HCT116 (cell line): ENCODE measurements at regions of chr10 and their contacts with region 1.

Region 1: DNA sequence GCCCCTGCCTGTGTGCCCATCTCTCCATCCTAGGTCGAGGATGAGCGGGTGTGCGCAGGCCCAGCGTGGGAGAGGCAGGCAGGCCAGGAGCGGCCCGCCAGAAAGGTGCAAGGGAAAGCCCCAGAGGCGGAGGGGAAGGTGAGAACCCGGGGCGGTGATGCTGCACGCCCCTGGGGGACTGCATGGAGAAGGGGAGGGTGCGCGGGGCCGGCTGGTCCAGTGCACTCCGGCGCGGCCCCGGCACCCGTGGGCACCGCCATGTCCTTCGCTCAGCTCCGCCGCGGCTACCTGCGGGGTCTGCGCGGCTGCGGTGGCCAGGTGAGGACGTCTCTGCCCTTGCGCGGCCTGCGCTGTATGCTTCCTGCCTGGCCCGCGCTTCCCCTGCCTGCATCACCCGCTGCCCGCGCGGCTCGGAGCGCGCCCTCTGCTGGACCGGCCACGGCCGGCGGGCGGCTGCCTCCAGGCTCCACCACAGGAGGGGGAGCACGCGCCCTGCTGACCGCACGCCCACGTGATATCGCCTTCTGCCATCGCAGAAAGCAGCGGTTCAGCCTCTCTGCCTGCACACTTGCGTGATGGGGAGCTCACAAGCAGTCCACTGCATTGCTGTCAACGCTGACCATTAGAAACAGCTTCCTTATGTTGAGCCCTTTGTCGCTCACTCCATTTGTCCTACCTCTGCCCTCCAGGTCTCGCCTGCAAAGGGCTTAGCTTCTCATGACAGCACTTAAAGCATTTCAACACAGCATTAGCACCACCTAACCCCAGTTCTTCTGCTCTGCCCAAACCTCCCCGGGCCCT is 73.9 kb downstream of the CXCL12 start:
- DNase-seq: peak; percentile 54
- ATAC-seq: peak; percentile 98
- H3K4me3 ChIP-seq: no peak overlapping the region
- H3K27ac ChIP-seq: no peak overlapping the region
- H3K4me1 ChIP-seq: peaks cover 0 to 8% of the 10 kb centered on the region in 2 experiments; a peak in 2 of 4 replicates
- H3K27me3 ChIP-seq: no peaks in the 10 kb centered on the region
- CTCF ChIP-seq: peak; percentile 74 to 86 (median 76)
- POLR2A ChIP-seq: no peak
- RAD21 ChIP-seq: peak; percentile 62

Region 2: DNA sequence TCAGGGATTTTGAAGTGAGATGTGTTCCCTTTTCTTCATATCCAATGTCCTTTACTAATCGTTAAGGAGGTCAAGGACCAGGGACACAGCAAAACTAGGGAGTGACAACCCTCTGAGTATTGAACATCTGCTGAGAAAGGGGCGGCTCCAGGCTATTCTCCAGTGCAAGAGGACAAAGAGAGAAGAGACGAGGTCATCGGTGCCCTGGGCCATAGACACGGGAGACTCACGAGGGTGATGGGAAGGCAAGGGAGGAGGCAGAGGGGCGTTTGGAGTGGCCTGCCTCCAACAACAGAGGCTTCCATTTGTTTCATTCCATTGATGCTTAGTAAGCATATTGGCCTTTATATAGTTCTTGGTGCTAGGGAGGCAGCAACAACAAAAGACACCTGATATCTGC is 194.5 kb before region 1 on chr10:
- CTCF ChIA-PET with region 1: no interaction called
- POLR2A ChIA-PET with region 1: no interaction called
- RAD21 ChIA-PET with region 1: no interaction called
- intact Hi-C with region 1: no loop called
- DNase-seq: no peak
- ATAC-seq: no peak
- H3K4me3 ChIP-seq: no peak overlapping the region
- H3K27ac ChIP-seq: no peak overlapping the region
- H3K4me1 ChIP-seq: no peaks in the 10 kb centered on the region
- H3K27me3 ChIP-seq: no peaks in the 10 kb centered on the region
- CTCF ChIP-seq: no peak
- POLR2A ChIP-seq: no peak
- RAD21 ChIP-seq: no peak

Region 3: DNA sequence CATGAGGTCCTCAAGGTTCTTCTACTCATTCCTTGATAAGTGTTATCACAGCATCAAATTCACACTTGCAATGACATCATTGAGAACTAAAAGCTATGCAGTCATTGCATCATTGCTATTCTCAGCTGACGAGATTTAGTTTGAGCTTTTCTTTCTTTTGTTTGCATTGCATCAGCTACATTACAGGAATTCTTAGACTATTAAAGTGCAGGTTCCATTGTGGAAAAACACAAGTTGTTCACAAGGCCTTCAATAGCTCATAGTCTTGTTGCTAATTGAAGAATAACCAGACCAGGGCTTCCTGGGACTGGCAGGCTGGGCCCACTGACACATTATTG is 65.4 kb before region 1 on chr10:
- CTCF ChIA-PET with region 1: no interaction called
- POLR2A ChIA-PET with region 1: no interaction called
- RAD21 ChIA-PET with region 1: no interaction called
- intact Hi-C with region 1: no loop called
- DNase-seq: no peak
- ATAC-seq: no peak
- H3K4me3 ChIP-seq: no peak overlapping the region
- H3K27ac ChIP-seq: no peak overlapping the region
- H3K4me1 ChIP-seq: no peaks in the 10 kb centered on the region
- H3K27me3 ChIP-seq: peaks cover 7% of the 10 kb centered on the region
- CTCF ChIP-seq: no peak
- POLR2A ChIP-seq: no peak
- RAD21 ChIP-seq: no peak

Region 4: GRCh38 chr10:44715136-44715535 is 404.2 kb after region 1 on chr10:
- CTCF ChIA-PET with region 1: no interaction called
- POLR2A ChIA-PET with region 1: no interaction called
- RAD21 ChIA-PET with region 1: no interaction called
- intact Hi-C with region 1: no loop called
- DNase-seq: no peak
- ATAC-seq: no peak
- H3K4me3 ChIP-seq: no peak overlapping the region
- H3K27ac ChIP-seq: no peak overlapping the region
- H3K4me1 ChIP-seq: no peaks in the 10 kb centered on the region
- H3K27me3 ChIP-seq: peaks cover 27% of the 10 kb centered on the region
- CTCF ChIP-seq: no peak
- POLR2A ChIP-seq: no peak
- RAD21 ChIP-seq: no peak

Region 5: DNA sequence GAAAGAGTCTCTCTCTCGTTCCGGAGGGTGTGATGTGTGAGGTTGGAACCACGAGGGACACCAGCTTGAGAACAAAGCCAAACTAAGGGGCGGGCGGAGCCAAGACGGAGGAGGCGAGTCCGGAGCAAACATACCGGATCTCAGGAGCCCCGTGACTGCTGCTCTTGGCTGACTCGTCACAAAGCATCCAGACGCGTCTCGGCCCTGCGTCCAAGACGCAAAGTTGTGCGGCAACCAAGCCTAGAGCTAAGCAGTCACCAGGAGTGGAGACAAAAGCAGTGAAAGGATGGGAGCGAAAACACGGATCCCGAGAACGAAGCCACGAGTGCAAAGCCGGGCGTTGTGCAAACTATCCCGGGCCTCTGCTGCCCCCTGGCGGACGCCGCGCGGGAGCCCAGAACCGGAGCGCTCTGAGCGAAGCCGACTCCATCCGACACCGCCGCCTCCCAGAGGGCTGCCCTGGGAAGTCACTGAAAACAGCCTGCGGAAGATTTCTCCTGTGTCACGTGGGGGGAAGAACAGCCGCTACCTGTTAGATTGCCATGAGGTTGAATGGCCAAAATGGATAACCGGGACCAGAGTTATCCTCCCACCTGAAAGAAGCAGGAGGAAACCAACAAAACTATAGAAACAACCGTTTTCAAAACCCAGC is 553.8 kb after region 1 on chr10:
- CTCF ChIA-PET with region 1: interaction called, 3 read pairs
- POLR2A ChIA-PET with region 1: no interaction called
- RAD21 ChIA-PET with region 1: no interaction called
- intact Hi-C with region 1: loop called (anchors 10 kb)
- DNase-seq: peak; percentile 60
- ATAC-seq: peak; percentile 96
- H3K4me3 ChIP-seq: peak overlapping the region; percentile 40 to 51
- H3K27ac ChIP-seq: no peak overlapping the region; the same call in 1 of the 2 replicates
- H3K4me1 ChIP-seq: peaks cover 10 to 18% of the 10 kb centered on the region in 2 experiments
- H3K27me3 ChIP-seq: peaks cover 7% of the 10 kb centered on the region; the same call in 1 of the 2 replicates
- CTCF ChIP-seq: peak; percentile 82 to 98 (median 97)
- POLR2A ChIP-seq: no peak
- RAD21 ChIP-seq: peak; percentile 80